ENCODE measurements at regions of chr11 and their contacts with region 1.

Region 1: GRCh38 chr11:65111744-65112414 is at the start of gene TM7SF2:
- DNase-seq: peak; percentile 96
- H3K4me3 Mint-ChIP-seq: peak within 1 kb of the TSS; percentile 87
- H3K27ac Mint-ChIP-seq: peak within 1 kb of the TSS; percentile 80
- H3K4me1 Mint-ChIP-seq: peaks cover 49% of the 10 kb centered on the region
- H3K27me3 Mint-ChIP-seq: no peaks in the 10 kb centered on the region
- total RNA-seq, gene TM7SF2: 27.2 to 28.4 TPM

Region 2: DNA sequence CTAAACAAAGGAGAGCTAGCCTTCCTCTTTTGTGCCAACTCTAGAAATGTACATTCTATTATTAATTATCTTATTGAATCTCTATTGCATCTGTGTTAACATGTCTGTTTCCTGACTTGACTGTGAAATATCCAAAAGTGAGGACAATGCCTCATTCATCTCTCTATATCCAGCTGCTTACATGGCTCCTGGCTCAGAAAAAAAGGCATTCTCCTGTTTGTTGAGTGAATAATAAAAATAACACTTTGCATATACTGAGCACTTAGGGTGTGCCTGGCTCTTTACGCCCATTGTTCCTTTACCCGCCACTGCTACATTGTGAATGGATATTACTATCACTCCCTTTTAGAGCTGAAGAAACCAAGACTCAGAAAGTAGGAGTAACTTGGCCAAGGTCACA is 408.8 kb before region 1 on chr11:
- CTCF ChIA-PET with region 1: no interaction called
- POLR2A ChIA-PET with region 1: no interaction called
- DNase-seq: no peak
- H3K4me3 Mint-ChIP-seq: no peak overlapping the region
- H3K27ac Mint-ChIP-seq: no peak overlapping the region
- H3K4me1 Mint-ChIP-seq: no peaks in the 10 kb centered on the region
- H3K27me3 Mint-ChIP-seq: peaks cover 45% of the 10 kb centered on the region

Region 3: GRCh38 chr11:65083834-65084597 is 27.9 kb before region 1 on chr11 and contains the starts of genes CDCA5 and ZFPL1:
- CTCF ChIA-PET with region 1: interaction called, 5 read pairs
- POLR2A ChIA-PET with region 1: interaction called, 13 read pairs
- DNase-seq: peak; percentile 96
- H3K4me3 Mint-ChIP-seq: peak within 1 kb of the TSS; percentile 91
- H3K27ac Mint-ChIP-seq: peak within 1 kb of the TSS; percentile 88
- H3K4me1 Mint-ChIP-seq: peaks cover 62% of the 10 kb centered on the region
- H3K27me3 Mint-ChIP-seq: no peaks in the 10 kb centered on the region
- total RNA-seq, gene CDCA5: 98.2 to 104 TPM
- total RNA-seq, gene ZFPL1: 30.1 to 31.6 TPM

Region 4: GRCh38 chr11:65095974-65096806 is 15.7 kb before region 1 on chr11 and contains the start of gene VPS51:
- CTCF ChIA-PET with region 1: interaction called, 89 read pairs
- POLR2A ChIA-PET with region 1: interaction called, 83 read pairs
- DNase-seq: peak; percentile 91
- H3K4me3 Mint-ChIP-seq: peak within 1 kb of the TSS; percentile 97
- H3K27ac Mint-ChIP-seq: peak within 1 kb of the TSS; percentile 96
- H3K4me1 Mint-ChIP-seq: peaks cover 25% of the 10 kb centered on the region
- H3K27me3 Mint-ChIP-seq: no peaks in the 10 kb centered on the region
- total RNA-seq, gene VPS51: 117 to 123 TPM

Region 5: GRCh38 chr11:65180877-65181568 is 69.1 kb after region 1 on chr11:
- CTCF ChIA-PET with region 1: interaction called, 9 read pairs
- POLR2A ChIA-PET with region 1: interaction called, 18 read pairs
- DNase-seq: peak; percentile 65
- H3K4me3 Mint-ChIP-seq: peak overlapping the region; percentile 95
- H3K27ac Mint-ChIP-seq: peak overlapping the region; percentile 65
- H3K4me1 Mint-ChIP-seq: peaks cover 25% of the 10 kb centered on the region
- H3K27me3 Mint-ChIP-seq: no peaks in the 10 kb centered on the region

Region 6: DNA sequence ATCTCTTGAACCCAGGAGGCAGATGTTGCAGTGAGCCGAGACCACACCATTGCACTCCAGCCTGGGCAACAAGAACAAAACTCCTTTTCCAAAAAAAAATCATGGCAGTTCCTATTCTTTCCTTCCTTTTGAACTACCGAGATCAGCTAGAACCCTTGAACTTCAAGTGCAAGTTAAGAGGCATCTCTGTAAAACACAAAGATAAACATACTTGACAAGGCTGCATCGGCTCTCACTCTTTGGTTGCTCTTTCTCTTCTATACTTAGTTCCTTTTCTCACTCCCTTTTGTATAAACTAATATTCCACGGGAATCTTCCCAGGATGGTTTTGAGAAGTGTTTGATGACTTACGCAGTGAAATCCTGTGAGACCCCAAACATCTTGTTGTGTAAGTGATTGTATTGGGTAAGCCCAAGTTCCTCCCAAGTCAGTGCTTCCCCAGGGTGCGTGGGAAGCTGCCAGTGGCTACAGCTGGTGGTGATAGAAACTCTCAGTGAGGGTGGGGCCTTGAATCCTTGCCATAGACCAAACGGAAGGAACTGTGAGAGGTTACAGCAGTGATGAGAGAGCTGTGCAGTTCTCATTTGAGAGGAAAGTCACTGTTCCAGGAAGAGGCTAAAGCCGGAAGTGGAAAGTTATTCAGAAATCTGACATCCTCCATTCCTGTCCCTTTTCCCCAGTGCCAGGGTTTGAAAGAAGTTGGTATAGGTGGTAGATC is 178.7 kb after region 1 on chr11:
- CTCF ChIA-PET with region 1: no interaction called
- POLR2A ChIA-PET with region 1: no interaction called
- DNase-seq: no peak
- H3K4me3 Mint-ChIP-seq: no peak overlapping the region
- H3K27ac Mint-ChIP-seq: peak overlapping the region; percentile 57
- H3K4me1 Mint-ChIP-seq: peaks cover 12% of the 10 kb centered on the region
- H3K27me3 Mint-ChIP-seq: no peaks in the 10 kb centered on the region

Measured in activated CD4-positive, alpha-beta memory T cell treated with anti-CD3 and anti-CD28 coated beads, Interleukin-2, amount 10 ng/mL, durations not matched to agents 7 days and 5 days (primary cell).